ENCODE measurements at regions of chr22 and their contacts with region 1.

Region 1: DNA sequence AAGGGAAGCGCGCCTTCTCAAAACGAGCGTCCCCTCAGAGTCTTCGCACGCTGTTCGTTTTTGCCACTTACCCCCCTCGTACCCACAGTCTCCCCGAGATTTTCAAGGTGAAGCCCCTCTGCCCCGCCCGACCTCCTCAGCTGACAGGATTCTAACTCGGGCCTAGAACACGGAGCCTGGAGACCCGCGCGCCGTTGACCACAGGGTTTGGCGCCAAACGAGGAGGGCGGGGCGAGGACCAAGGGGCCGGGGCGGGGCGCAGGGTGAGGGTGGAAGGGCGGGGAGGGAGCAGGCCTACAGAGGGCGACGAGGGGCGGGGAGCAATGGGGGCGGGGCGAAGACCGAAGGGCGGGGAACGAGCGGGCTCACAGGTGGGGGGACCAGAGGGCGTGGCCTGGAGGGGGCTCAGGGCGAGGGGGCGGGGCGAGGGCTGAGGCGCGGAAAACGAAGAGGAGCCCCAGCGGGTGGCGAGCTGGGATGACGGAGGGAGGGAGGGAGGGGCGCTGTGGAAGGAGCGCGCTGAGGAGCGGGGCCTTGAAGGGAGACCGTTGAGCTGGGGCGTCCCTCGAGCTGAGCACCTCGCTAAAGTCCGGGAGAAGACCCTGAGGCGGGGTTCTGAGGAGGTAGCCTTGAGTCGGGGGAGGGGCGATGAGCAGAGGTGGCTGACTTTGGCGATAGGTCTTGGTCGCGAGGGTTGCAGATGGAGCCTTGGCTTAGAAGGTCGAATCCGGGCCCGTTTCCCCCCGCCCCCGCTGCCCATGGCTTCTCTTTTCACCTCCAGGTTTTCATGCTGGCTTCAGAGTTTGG is at the start of gene DMC1:
- DNase-seq: peak; percentile 97
- H3K4me3 ChIP-seq: peak within 1 kb of the TSS; percentile 84
- H3K27ac ChIP-seq: peak within 1 kb of the TSS; percentile 77
- H3K4me1 ChIP-seq: peaks cover 23% of the 10 kb centered on the region
- CTCF ChIP-seq: no peak
- total RNA-seq, gene DMC1: 44.3 and 84.7 TPM in 2 replicates

Region 2: DNA sequence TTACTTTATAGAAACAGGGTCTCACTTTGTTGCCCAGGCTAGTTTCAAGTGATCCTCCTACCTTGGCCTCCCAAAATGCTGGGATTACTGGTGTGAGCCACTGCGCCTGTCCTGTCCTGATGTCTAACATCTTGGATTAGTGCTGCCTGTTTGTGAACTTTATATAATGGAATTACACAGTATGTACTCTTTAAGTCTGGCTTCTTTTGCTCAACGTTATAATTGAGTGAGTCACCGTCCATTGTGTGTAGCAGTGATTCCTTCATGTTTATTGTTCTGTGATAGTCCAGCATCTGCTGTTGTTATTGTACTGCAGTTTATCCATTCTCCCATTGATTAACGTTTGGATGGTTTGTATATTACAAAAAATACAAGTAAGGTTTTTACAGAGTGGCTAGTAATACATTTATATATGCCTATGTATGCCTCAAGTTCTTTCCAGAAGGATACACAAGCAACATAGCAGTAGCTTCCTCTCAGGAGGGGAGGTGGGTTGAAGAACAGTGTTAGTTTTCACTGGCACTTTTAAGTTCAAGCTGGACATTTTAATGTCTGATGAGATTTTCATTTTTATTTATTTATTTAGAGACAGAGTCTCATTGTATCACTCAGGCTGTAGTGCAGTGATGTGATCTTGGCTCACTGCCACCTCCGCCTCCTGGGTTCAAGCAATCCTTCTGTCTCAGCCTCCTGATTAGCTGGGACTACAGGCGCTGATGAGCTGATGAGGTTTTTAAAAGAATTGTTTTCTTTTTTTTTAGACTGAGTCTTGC is 689.3 kb before region 1 on chr22:
- CTCF ChIA-PET with region 1: no interaction called
- POLR2A ChIA-PET with region 1: no interaction called
- intact Hi-C with region 1: no loop called
- DNase-seq: no peak
- H3K4me3 ChIP-seq: no peak overlapping the region
- H3K27ac ChIP-seq: no peak overlapping the region
- H3K4me1 ChIP-seq: no peaks in the 10 kb centered on the region
- CTCF ChIP-seq: no peak

Region 3: DNA sequence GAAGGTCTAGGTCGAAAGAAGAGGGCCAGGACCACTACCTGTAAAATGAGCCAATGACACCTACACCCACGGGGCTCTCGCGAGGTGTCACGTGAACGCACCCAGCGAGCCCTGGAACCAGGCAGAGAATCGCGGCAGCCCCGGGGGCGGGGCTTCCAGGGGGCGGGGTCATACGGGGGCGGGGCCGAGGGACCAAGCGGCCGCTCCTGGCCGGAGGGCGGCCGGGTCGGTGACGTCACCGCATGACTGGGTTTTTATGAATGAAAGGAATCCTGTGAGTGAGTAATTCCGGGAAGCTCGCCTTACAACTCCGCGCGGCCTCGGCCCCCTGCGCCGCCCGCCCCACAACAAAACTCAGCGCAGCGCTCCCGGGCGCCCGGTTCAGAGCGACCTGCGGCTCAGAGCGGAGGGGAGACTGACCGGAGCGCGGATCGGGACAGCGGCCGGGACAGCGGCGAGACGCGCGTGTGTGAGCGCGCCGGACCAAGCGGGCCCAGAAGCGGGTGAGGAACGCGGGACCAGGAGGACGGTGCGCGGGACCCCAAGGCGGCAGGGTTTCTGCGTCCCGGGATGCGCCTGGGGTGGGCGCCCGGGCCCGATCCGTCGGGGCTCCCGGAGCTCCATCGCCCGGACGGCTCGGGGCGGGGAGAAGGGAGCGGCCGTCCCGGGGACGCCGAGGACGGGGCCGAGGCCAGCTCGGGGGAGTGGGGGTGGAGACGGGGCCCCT is 368.3 kb before region 1 on chr22 and contains the start of gene MAFF:
- CTCF ChIA-PET with region 1: no interaction called
- POLR2A ChIA-PET with region 1: no interaction called
- intact Hi-C with region 1: loop called (anchors 5 kb)
- DNase-seq: peak; percentile 94
- H3K4me3 ChIP-seq: peak within 1 kb of the TSS; percentile 79
- H3K27ac ChIP-seq: peak within 1 kb of the TSS; percentile 18
- H3K4me1 ChIP-seq: peaks cover 47% of the 10 kb centered on the region
- CTCF ChIP-seq: no peak
- total RNA-seq, gene MAFF: 3.8 and 5.7 TPM in 2 replicates

Region 4: DNA sequence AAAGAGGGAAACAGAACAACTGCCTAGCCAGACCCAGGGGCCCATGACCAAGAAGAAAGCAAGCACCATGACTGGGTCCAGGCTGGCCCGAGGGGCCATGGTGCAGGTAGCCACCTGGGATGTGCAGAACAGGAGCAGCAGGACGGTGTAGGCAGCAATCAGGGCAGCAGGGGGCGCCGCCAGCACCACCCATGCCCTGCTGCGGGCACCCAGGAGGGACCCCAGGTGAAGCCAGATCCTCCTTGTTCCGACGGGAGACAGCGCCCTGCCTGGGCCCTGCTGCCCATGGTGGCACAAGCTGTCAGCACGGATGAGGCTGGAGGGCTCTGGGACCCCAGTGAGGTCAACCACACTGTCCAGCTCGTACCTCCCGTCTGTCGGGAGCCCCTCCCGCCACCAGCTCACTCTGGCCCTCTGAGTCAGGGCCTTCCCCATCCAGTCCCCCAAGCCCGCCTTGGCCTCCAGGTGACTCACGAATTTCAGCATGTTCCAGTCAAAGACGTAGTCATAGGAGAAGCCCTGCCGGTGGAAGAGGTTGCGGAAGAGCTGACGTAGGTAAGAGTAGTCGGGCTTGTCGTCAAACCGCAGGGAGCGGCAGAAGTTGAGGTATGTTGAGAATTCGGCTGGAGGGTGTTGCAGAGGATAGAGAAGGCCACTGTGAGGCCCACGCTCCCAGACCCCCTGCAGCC is 271.7 kb before region 1 on chr22:
- CTCF ChIA-PET with region 1: no interaction called
- POLR2A ChIA-PET with region 1: no interaction called
- intact Hi-C with region 1: loop called (anchors 5 kb)
- DNase-seq: peak; percentile 53
- H3K4me3 ChIP-seq: no peak overlapping the region
- H3K27ac ChIP-seq: no peak overlapping the region
- H3K4me1 ChIP-seq: no peaks in the 10 kb centered on the region
- CTCF ChIP-seq: peak; percentile 77

Region 5: GRCh38 chr22:38398609-38399461 is 171.3 kb before region 1 on chr22:
- CTCF ChIA-PET with region 1: no interaction called
- POLR2A ChIA-PET with region 1: interaction called, 8 read pairs
- intact Hi-C with region 1: loop called (anchors 2 kb)
- DNase-seq: peak; percentile 89
- H3K4me3 ChIP-seq: peak overlapping the region; percentile 87
- H3K27ac ChIP-seq: peak overlapping the region; percentile 90
- H3K4me1 ChIP-seq: peaks cover 28% of the 10 kb centered on the region
- CTCF ChIP-seq: no peak

Region 6: DNA sequence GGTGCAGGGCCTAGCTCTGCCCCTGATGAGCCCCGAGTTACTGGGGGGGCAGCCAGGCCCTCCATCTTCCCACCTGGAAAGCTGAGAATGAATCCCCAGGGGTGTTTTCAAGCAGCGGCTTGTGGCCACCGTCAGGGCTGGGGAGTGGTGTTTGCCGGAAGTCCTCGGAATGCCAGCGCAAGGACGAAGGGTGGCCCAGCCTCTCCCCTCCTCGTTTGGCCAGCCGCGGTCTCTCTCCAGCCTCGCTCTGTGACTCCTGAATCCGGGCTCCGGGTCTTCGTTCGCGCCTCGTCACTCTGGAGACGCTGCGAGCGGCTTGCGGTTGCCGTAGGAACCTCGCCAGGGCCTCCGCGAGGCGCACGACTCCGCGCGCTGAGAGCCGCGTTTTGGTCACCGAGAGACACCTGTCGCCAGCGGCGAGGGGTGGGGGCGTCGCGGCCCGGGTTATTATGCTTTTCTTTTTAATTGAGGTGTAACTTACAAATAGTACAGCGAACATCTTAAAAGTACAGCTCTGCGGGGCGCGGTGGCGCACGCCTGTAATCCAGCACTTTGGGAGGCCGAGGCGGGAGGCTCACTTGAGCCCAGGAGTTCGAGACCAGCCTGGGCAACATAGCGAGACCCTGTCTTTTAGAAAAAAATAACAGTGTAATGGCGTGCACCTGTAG is 108.6 kb before region 1 on chr22:
- CTCF ChIA-PET with region 1: no interaction called
- POLR2A ChIA-PET with region 1: no interaction called
- intact Hi-C with region 1: loop called (anchors 5 kb)
- DNase-seq: peak; percentile 80
- H3K4me3 ChIP-seq: no peak overlapping the region
- H3K27ac ChIP-seq: no peak overlapping the region
- H3K4me1 ChIP-seq: peaks cover 34% of the 10 kb centered on the region
- CTCF ChIP-seq: no peak

Region 7: GRCh38 chr22:38506118-38506962 is 63.8 kb before region 1 on chr22 and contains the start of gene DDX17:
- CTCF ChIA-PET with region 1: no interaction called
- POLR2A ChIA-PET with region 1: no interaction called
- intact Hi-C with region 1: loop called (anchors 2 kb)
- DNase-seq: peak; percentile 99
- H3K4me3 ChIP-seq: peak within 1 kb of the TSS; percentile 83
- H3K27ac ChIP-seq: peak within 1 kb of the TSS; percentile 91
- H3K4me1 ChIP-seq: peaks cover 36% of the 10 kb centered on the region
- CTCF ChIP-seq: no peak
- total RNA-seq, gene DDX17: 626 and 667 TPM in 2 replicates

Measured in OCI-LY7 (cell line).